ENCODE measurements at regions of chr4 and their contacts with region 1.

Region 1: DNA sequence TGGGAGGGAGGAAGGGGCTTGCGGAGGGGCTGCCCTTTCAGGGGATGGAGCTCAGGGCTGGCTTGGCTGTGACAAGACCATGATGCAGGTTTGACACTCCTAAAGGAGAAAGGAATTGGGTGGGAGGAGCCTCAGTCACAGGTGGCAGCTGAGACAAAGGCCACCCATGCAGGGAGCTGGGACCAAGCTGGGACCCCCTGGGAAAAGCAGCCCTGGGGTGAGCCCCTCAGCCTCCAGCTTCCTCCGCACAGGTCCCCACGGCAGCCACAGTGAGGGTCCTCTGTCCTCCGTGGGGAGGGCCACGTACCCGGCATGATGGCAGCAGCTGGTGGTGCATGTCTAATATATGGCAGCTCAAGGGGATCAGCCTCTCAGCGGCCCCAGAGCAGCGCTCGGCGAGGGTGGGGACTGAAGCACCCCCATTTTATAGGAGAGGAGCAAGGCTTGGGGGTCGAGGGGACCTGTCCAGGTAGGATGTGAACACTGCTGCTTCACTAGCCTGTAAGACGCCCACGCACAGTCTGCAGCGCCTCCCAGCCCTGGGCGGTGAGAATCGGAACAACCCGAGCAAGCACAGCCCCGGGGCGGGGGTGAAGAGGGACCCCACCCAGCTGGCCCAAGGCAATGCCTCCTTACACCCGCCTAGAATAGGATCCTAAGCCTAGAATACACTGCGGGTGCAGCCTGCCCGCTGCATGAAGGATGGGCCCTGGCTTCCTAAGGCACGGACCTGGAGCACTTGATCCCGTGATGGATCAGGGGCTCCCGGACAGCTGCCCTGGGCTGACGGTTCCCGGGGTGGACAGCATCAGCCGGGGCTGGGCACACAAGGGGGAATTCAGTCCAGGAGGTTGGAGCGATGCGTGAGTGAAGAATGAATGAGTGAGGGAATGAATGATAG is 17.5 kb downstream of the ADRA2C start:
- DNase-seq: peak; percentile 69
- H3K4me3 Mint-ChIP-seq: peak overlapping the region; percentile 36
- H3K27ac Mint-ChIP-seq: no peak overlapping the region
- H3K4me1 Mint-ChIP-seq: peaks cover 30% of the 10 kb centered on the region
- H3K27me3 Mint-ChIP-seq: no peaks in the 10 kb centered on the region
- CTCF ChIP-seq: peak; percentile 43

Region 2: GRCh38 chr4:3480528-3481112 is 303.0 kb before region 1 on chr4:
- CTCF ChIA-PET with region 1: interaction called, 10 read pairs
- intact Hi-C with region 1: no loop called
- DNase-seq: peak; percentile 86
- H3K4me3 Mint-ChIP-seq: no peak overlapping the region
- H3K27ac Mint-ChIP-seq: no peak overlapping the region
- H3K4me1 Mint-ChIP-seq: no peaks in the 10 kb centered on the region
- H3K27me3 Mint-ChIP-seq: no peaks in the 10 kb centered on the region
- CTCF ChIP-seq: peak; percentile 86

Region 3: DNA sequence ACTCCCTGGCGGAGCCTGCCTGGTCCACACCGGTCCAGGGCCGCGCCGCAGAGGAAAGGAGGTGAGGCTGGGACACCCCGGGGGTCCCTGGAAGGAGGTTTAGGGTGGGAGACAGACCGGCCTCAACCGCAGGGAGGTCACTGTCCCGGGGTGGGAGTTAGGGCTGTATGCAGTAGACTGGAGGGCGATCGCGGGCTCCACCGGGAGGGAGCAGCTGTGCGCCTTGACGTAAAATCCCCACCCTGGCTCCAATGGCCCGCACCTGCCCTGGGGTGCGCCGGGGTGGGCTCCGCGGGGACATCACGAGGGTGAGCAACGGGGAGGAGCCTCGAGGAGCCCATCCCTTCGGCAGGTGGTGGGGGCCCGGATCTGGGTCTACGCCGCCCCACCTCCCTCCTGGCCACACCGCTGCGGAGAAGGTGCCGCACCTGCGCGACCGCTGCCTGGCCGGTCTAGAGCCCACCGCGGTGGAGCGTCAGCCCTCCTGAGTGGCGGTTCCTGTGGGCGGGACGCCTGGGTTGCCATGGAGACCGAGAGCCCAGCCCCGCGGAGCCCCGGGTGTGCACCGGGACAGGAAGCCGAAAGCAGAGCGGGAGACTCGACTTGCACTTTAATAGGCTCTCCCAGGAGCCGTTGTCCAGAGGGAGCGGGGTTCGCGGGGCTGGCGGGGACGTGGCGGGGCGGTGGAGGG is 87.7 kb after region 1 on chr4:
- CTCF ChIA-PET with region 1: no interaction called
- intact Hi-C with region 1: loop called (anchors 10 kb)
- DNase-seq: no peak
- H3K4me3 Mint-ChIP-seq: no peak overlapping the region
- H3K27ac Mint-ChIP-seq: no peak overlapping the region
- H3K4me1 Mint-ChIP-seq: no peaks in the 10 kb centered on the region
- H3K27me3 Mint-ChIP-seq: peaks cover 75% of the 10 kb centered on the region
- CTCF ChIP-seq: no peak